PC-3 (cell line): ENCODE measurements at regions of chr9 and their contacts with region 1.

Region 1: GRCh38 chr9:893843-894420 is 52.4 kb downstream of the DMRT1 start:
- DNase-seq: peak; percentile 71
- ATAC-seq: peak; percentile 88
- H3K4me3 ChIP-seq: peak overlapping the region; percentile 34; the same call in 1 of the 2 replicates
- H3K27ac ChIP-seq: no peak overlapping the region
- H3K4me1 ChIP-seq: no peaks in the 10 kb centered on the region
- H3K27me3 ChIP-seq: no peaks in the 10 kb centered on the region
- CTCF ChIP-seq: peak; percentile 82

Region 2: DNA sequence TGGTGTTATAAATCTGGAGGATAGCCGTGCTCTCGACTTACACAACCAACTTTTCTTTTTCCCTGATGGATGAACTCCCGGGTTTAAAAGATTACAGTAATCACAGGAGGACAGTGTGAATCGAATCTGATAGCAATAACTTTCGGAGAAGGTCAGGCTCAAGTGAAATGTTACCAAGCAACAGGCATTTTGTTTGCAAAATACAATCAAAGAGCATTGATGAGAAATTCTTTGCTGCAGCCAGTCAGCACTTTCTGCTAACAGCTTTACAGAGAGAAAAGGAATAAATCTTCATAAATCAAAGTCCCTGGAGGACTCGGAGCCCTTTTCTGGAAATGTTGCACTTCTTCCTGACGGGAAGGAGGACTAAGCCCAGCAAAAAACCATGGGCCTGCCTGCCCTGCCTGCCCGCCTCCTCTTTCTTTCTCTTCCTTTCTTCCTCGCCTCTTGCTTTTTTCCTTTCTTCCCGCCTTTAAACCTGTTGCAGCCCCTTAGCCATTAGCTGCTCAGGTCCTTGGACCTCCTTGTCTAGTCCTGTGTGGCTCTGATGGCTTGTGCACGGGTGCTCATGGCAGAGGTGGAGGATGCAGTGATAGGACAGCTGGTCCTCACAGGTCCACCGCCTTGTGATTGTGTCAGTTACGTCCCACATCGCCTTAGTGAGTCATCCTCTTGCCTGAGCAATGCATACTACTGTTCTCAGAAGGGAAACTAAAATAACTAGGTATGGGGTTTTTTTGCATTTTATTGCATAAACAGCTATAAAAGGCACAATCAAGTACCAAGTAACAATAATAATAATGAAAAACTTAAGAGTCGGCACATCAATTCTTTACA is 88.7 kb after region 1 on chr9:
- CTCF ChIA-PET with region 1: no interaction called
- POLR2A ChIA-PET with region 1: no interaction called
- intact Hi-C with region 1: no loop called
- DNase-seq: no peak
- ATAC-seq: no peak
- H3K4me3 ChIP-seq: no peak overlapping the region
- H3K27ac ChIP-seq: no peak overlapping the region
- H3K4me1 ChIP-seq: no peaks in the 10 kb centered on the region
- H3K27me3 ChIP-seq: peaks cover 60% of the 10 kb centered on the region
- CTCF ChIP-seq: no peak

Region 3: DNA sequence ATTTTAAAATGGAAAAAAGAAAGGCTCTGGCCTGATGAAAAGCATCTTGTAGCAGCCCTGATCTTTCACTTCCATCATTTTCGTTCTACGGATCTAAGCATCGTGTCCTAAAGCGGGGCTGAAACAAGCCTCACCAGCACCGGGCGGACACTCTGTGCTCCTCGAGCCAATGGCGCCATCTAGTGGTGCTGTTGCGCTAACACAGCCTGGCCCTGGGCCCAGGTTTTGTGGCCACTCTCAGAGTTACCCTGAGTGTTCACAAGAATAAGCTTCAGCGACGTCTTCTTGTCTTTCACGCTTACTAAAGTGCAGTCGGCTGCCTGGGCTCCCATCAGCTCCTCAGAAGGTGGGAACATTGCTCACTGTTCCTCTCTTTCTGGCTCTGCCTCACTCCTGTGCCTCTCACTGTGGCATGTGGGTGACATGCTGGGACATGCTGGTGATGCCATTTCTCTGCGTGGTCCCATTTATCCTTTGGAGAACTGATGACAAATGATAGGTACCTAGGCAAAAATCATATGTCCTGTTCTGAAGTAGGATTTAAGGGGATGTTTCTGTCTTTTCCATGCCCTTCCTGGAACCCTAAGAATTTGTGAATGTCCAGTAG is 115.3 kb after region 1 on chr9:
- CTCF ChIA-PET with region 1: interaction called, 9 read pairs
- POLR2A ChIA-PET with region 1: no interaction called
- intact Hi-C with region 1: loop called (anchors 1 kb)
- DNase-seq: peak; percentile 90
- ATAC-seq: peak; percentile 97
- H3K4me3 ChIP-seq: no peak overlapping the region
- H3K27ac ChIP-seq: no peak overlapping the region
- H3K4me1 ChIP-seq: no peaks in the 10 kb centered on the region
- H3K27me3 ChIP-seq: no peaks in the 10 kb centered on the region
- CTCF ChIP-seq: peak; percentile 85

Region 4: GRCh38 chr9:1083325-1083913 is 189.5 kb after region 1 on chr9:
- CTCF ChIA-PET with region 1: no interaction called
- POLR2A ChIA-PET with region 1: no interaction called
- intact Hi-C with region 1: no loop called
- DNase-seq: peak; percentile 26
- ATAC-seq: peak; percentile 71
- H3K4me3 ChIP-seq: peak overlapping the region; percentile 60
- H3K27ac ChIP-seq: no peak overlapping the region
- H3K4me1 ChIP-seq: no peaks in the 10 kb centered on the region
- H3K27me3 ChIP-seq: no peaks in the 10 kb centered on the region
- CTCF ChIP-seq: no peak

Region 5: DNA sequence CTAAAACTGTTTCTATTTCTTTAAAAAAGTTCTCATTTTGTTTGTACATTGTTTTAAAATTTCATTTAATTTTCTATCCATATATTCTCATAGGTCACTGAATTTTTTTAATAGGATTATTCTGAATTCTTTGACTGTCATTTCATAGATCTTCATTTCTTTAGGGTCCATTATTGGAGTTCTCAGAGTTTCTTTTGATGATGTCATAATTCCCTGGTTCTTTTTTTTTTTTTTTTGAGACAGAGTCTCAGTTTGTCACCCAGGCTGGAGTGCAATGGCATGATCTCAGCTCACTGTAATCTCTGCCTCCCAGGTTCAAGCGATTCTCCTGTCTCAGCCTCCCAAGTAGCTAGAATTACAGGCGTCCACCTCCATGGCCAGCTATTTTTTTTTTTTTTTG is 246.1 kb after region 1 on chr9:
- CTCF ChIA-PET with region 1: no interaction called
- POLR2A ChIA-PET with region 1: no interaction called
- intact Hi-C with region 1: no loop called
- DNase-seq: no peak
- ATAC-seq: no peak
- H3K4me3 ChIP-seq: no peak overlapping the region
- H3K27ac ChIP-seq: no peak overlapping the region
- H3K4me1 ChIP-seq: no peaks in the 10 kb centered on the region
- H3K27me3 ChIP-seq: no peaks in the 10 kb centered on the region
- CTCF ChIP-seq: no peak